ENCODE measurements at regions of chr16 and their contacts with region 1.

Region 1: GRCh38 chr16:64455254-64455653 is 666.6 kb downstream of the CDH11 start:
- DNase-seq: no peak

Region 2: DNA sequence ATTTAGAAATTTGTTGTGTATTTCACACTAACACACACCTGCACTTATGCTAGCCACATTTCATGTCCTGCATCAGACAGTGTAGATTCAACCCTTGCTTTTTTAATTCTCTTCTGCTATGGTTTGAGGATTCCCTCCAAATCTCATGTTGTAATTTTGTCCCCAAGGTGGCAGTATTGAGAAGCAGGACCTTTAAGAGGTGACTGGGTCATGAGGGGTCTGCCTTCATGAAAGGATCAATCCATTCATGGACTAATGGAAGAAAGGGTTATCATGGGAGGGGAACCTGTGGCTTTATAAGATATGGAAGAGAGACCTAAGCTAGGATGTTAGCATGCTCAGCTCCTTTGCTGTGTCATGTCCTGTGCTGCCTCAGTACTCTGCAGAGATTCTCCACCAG is 365.6 kb before region 1 on chr16:
- intact Hi-C with region 1: loop called (anchors 5 kb)
- DNase-seq: no peak

Region 3: GRCh38 chr16:64638766-64639165 is 183.5 kb after region 1 on chr16:
- intact Hi-C with region 1: no loop called
- DNase-seq: no peak

Measured in cardiac septum (tissue), 1 donor.